Psoas muscle (tissue), 8 donors: ENCODE measurements at regions of chr2 and their contacts with region 1.

Region 1: DNA sequence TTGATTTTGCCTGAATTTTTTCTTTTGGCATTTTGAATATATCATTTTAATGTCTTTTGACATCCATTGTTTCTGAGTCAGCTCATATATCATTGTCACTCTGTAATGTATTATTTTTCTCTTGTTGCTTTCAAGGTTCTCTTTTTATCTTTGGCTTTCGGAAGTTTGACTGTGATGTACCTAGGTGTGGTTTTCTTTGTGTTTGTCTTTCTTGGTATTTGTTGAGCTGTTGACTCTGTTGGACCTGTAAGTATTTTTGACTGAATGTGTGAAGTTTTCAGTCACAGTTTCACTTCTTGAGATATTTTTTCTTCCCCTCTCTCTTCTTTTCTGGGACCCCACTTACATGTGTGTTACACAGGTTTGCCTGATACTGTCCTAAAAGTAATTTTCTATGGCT is 24.9 kb upstream of the DRC1 start:
- DNase-seq: no peak
- ATAC-seq: no peak
- H3K4me3 ChIP-seq: no peak overlapping the region
- H3K27ac ChIP-seq: no peak overlapping the region
- H3K4me1 ChIP-seq: no peaks in the 10 kb centered on the region
- H3K27me3 ChIP-seq: no peaks in the 10 kb centered on the region
- CTCF ChIP-seq: no peak

Region 2: DNA sequence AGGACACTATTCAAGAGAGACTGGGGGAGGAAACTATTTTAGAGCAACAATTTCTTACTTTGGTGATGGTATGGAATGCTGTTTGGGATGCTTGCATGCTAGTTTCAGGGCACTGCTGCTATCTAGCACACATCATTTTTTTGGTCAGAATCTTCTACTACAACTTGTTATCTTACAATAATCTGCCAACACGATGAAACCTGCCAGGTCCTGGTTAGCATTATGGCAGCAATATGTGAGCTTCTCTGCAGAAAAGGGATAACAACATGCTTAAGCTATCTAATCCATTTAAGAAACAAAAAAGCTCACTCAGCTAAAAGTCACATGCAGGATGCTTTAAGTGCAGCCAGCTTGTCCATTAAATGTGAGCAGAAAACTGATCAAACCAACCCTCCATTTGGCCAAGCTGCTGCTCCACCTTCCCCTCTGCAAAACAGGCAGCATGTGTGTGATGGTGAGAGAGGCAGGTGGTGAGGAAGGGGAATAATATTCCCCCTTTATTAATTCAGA is 173.8 kb before region 1 on chr2:
- intact Hi-C with region 1: no loop called
- DNase-seq: no peak
- ATAC-seq: no peak
- H3K4me3 ChIP-seq: no peak overlapping the region
- H3K27ac ChIP-seq: no peak overlapping the region
- H3K4me1 ChIP-seq: no peaks in the 10 kb centered on the region
- H3K27me3 ChIP-seq: no peaks in the 10 kb centered on the region
- CTCF ChIP-seq: no peak

Region 3: DNA sequence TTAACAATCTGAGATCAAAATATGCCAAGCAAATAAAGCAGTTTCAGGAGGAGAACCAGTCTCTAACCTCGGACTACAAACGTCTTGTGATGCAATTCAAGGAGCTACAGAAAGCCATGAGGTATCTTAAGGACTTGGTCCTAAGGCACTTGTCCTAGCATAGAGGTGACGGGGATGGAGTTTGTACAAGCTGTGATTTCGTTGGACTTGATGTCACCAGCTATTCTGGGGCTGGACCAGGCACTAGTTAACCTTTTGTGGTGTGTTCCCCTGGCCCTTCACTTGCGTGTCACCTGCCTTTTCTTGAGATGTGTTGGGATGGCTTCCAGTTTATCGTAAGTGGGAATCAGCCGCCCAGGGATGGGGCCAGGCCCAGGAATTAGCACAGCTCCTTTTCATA is 67.4 kb after region 1 on chr2:
- intact Hi-C with region 1: loop called in 1 of 2 experiments (anchors 2 kb)
- DNase-seq: no peak
- ATAC-seq: peak; percentile 52 to 98 (median 91)
- H3K4me3 ChIP-seq: no peak overlapping the region
- H3K27ac ChIP-seq: no peak overlapping the region
- H3K4me1 ChIP-seq: no peaks in the 10 kb centered on the region
- H3K27me3 ChIP-seq: no peaks in the 10 kb centered on the region
- CTCF ChIP-seq: no peak